Panc1 (cell line): ENCODE measurements at regions of chr20 and their contacts with region 1.

Region 1: DNA sequence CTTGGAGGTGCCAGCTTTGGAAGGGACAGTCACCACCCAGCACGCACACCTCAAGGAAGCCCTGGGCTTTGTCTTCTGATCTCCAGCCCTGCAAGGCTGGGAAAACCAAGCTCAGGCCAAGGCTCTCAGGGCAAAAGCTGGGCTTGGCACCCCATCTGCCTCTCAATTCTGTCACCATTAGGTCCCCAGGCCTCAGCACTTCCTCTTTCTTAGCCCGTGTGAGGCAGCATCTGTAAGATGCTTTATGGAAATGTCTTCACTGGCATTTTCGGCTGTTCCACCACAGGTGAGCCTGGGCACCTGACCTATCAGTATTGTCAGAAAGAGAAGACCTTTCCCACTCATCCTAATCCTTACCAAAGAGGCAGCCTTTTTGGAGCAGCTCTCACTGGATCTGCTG is 24.6 kb downstream of the GMEB2 start:
- DNase-seq: no peak
- ATAC-seq: no peak
- H3K4me3 ChIP-seq: no peak overlapping the region
- H3K27ac ChIP-seq: no peak overlapping the region
- H3K4me1 ChIP-seq: no peaks in the 10 kb centered on the region
- H3K27me3 ChIP-seq: no peaks in the 10 kb centered on the region
- CTCF ChIP-seq: no peak

Region 2: GRCh38 chr20:63627129-63627750 is 24.9 kb after region 1 on chr20:
- CTCF ChIA-PET with region 1: no interaction called
- POLR2A ChIA-PET with region 1: interaction called, 10 read pairs
- in situ Hi-C with region 1: no loop called
- intact Hi-C with region 1: no loop called
- DNase-seq: peak; percentile 43
- ATAC-seq: peak; percentile 89
- H3K4me3 ChIP-seq: peak overlapping the region; percentile 79 to 83
- H3K27ac ChIP-seq: peak overlapping the region; percentile 65
- H3K4me1 ChIP-seq: 0 out of 2 replicates have a peak, but pooled peaks cover 2% of the 10 kb centered on the region
- H3K27me3 ChIP-seq: no peaks in the 10 kb centered on the region
- CTCF ChIP-seq: no peak

Region 3: DNA sequence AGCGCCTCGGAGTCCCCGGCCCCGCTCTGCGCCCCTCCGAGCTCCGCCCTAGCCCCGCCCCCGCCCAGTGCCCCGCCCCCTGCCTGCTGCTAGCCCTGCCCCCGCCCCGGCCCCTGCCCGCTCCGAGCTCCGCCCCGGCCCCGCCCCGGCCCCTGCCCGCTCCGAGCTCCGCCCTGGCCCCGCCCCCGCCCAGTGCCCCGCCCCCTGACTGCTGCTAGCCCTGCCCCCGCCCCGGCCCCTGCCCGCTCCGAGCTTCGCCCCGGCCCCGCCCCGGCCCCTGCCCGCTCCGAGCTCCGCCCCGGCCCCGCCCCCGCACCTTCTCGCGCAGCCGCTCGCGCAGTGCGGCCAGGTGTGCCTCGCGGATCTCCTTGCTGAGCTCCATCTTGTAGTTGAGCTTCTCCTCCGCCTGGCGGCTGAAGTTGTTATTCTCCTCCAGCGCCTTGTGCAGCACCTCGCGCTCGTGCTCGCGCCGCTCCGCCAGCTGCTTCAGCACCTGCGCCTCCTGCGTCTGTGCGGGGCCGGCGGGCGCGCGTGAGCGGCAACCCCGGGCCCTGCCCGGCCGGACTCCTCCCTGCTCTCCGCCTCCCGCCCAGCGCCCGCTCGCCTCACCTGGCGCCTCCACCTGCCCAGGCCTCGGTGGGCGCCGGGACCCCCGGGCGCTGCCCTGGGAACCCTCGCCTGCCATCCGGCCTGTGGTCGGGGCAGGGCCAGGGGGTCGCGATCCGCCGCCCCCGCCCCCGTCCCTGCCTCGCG is 39.6 kb after region 1 on chr20:
- CTCF ChIA-PET with region 1: no interaction called
- POLR2A ChIA-PET with region 1: interaction called, 16 read pairs
- in situ Hi-C with region 1: no loop called
- intact Hi-C with region 1: no loop called
- DNase-seq: no peak
- ATAC-seq: peak; percentile 86
- H3K4me3 ChIP-seq: peak overlapping the region; percentile 48 to 54
- H3K27ac ChIP-seq: no peak overlapping the region
- H3K4me1 ChIP-seq: peaks cover 6% of the 10 kb centered on the region
- H3K27me3 ChIP-seq: no peaks in the 10 kb centered on the region
- CTCF ChIP-seq: no peak